Caco-2 (cell line): ENCODE measurements at regions of chr19 and their contacts with region 1.

Region 1: DNA sequence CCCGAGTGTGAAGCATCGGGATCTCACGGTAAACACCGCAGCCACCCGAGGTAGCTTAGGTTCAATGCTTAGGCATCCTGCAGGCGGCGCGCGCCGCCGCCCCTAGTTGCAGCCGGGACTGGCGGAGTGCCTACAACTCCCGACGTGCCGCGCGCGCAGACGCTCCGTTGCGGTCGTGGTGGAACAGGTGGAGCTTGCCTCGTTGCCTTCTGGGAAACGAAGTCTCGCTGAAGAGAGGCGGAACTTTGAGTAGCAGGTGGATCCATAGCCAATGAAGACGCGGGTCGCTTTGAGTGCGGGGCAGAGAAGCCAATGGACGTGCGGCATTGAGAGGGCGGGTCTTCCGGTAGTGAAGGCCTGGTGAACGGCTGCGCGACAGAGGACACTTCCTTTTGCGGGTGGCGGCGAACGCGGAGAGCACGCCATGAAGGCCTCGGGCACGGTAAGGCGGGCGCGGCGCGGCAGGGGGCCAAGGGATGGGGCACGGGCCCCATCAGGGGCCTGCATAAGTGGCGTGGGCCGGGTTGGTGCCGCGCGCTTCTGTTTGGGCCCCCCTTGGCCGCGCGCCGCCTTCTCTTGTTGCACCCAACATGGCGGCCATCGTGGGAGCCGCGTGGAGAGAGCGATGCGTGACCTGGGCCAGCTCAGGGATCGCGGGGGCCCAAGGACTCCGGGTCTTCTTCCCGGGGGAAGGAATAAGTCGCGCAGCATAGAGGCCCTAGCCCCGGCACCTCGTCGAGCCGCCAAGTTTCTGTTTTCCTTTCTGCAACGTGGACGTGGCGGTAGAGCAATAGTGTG is at the start of gene RPL18A:
- DNase-seq: peak; percentile 97 to 99
- H3K4me3 ChIP-seq: peak within 1 kb of the TSS; percentile 84
- H3K4me3 Mint-ChIP-seq: peak within 1 kb of the TSS; percentile 90
- H3K27ac Mint-ChIP-seq: peak within 1 kb of the TSS; percentile 98
- H3K4me1 ChIP-seq: peaks cover 9% of the 10 kb centered on the region
- H3K4me1 Mint-ChIP-seq: no peaks in the 10 kb centered on the region
- H3K27me3 ChIP-seq: no peaks in the 10 kb centered on the region
- H3K27me3 Mint-ChIP-seq: peaks cover 2% of the 10 kb centered on the region
- CTCF ChIP-seq: peak; percentile 60 to 89
- total RNA-seq, gene RPL18A: 1,599 and 1,686 TPM in 2 replicates

Region 2: GRCh38 chr19:17419621-17420466 is 439.9 kb before region 1 on chr19 and contains the start of gene MVB12A:
- CTCF ChIA-PET with region 1: no interaction called
- POLR2A ChIA-PET with region 1: interaction called, 12 read pairs
- intact Hi-C with region 1: no loop called
- DNase-seq: peak; percentile 95 to 97
- H3K4me3 ChIP-seq: peak within 1 kb of the TSS; percentile 85
- H3K4me3 Mint-ChIP-seq: peak within 1 kb of the TSS; percentile 85
- H3K27ac Mint-ChIP-seq: peak within 1 kb of the TSS; percentile 89
- H3K4me1 ChIP-seq: peaks cover 8% of the 10 kb centered on the region; the same call in 1 of the 2 replicates
- H3K4me1 Mint-ChIP-seq: peaks cover 11% of the 10 kb centered on the region
- H3K27me3 ChIP-seq: no peaks in the 10 kb centered on the region
- H3K27me3 Mint-ChIP-seq: no peaks in the 10 kb centered on the region
- CTCF ChIP-seq: no peak
- total RNA-seq, gene MVB12A: 36.7 and 37.6 TPM in 2 replicates

Region 3: DNA sequence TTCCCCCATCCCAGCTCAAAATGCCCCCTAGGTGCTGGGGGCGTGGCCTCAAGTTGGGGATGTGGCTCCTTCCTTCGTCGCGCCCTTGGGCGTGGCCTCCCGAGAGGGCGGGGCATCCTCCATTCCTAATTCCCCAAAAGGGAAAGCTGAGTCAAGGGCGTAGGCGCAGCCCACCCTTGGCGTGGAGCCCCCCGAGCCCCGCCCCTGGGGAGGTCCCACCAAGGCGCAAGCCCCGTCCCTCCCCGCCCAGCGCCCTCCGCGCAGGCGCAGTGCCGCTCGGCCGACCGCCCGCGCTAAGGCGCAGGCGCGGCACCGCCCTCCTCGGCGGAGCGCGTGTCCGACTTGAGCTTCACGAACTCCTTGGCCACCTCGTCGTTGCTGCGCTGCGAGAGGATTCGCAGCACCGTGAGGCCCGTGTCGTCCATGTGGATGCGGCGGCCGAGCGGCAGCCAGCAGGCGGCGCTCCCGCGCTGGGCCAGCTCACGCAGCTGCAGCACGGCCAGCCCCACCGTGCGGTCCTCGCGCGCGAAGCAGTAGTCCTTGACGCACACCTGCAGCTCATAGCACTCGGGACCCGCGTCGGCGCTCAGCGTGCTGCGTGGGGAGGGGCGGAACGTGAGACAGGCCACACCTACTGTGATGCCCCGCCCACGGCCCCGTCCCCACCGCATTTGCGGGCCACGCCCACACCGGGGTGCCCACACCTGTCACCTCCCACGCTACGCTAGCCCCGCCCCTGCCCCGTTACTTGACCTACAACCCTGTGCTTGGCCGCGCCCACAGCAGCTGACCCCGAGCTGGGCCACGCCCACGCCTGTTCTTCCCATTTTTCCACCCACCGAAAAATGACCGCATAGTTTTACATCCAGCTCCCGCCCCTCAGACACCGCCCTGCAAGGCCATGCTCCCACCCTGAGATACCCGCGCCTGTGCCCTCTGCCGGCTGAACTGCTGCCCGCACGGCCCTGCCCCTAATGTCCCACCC is 253.7 kb before region 1 on chr19:
- CTCF ChIA-PET with region 1: interaction called, 15 read pairs
- POLR2A ChIA-PET with region 1: interaction called, 6 read pairs
- intact Hi-C with region 1: no loop called
- DNase-seq: peak; percentile 95
- H3K4me3 ChIP-seq: peak overlapping the region; percentile 65
- H3K4me3 Mint-ChIP-seq: peak overlapping the region; percentile 73
- H3K27ac Mint-ChIP-seq: peak overlapping the region; percentile 81
- H3K4me1 ChIP-seq: no peaks in the 10 kb centered on the region
- H3K4me1 Mint-ChIP-seq: peaks cover 6% of the 10 kb centered on the region
- H3K27me3 ChIP-seq: no peaks in the 10 kb centered on the region
- H3K27me3 Mint-ChIP-seq: no peaks in the 10 kb centered on the region
- CTCF ChIP-seq: peak; percentile 52 to 66

Region 4: DNA sequence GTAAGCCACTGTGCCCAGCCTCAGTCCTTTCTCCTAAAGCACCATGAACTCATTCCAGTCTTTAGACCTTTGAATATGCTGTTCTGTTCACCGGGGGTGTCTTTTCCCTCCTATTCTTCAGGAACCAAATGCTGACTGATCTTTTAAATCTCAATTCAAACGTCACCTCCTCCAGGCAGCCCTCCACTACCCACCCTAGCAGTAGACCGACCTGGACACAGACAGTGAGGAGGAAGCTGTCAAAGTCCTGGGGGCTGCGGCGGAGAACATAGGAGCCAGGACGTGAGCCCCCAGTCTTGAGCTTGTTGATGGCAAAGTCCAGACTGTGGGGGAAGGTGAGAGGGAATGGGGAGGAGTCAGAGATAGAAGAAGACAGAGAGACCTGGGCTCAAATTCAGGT is 19.7 kb before region 1 on chr19:
- CTCF ChIA-PET with region 1: no interaction called
- POLR2A ChIA-PET with region 1: no interaction called
- intact Hi-C with region 1: no loop called
- DNase-seq: no peak
- H3K4me3 ChIP-seq: no peak overlapping the region
- H3K4me3 Mint-ChIP-seq: no peak overlapping the region
- H3K27ac Mint-ChIP-seq: no peak overlapping the region
- H3K4me1 ChIP-seq: no peaks in the 10 kb centered on the region
- H3K4me1 Mint-ChIP-seq: no peaks in the 10 kb centered on the region
- H3K27me3 ChIP-seq: no peaks in the 10 kb centered on the region
- H3K27me3 Mint-ChIP-seq: peaks cover 3% of the 10 kb centered on the region
- CTCF ChIP-seq: no peak

Region 5: DNA sequence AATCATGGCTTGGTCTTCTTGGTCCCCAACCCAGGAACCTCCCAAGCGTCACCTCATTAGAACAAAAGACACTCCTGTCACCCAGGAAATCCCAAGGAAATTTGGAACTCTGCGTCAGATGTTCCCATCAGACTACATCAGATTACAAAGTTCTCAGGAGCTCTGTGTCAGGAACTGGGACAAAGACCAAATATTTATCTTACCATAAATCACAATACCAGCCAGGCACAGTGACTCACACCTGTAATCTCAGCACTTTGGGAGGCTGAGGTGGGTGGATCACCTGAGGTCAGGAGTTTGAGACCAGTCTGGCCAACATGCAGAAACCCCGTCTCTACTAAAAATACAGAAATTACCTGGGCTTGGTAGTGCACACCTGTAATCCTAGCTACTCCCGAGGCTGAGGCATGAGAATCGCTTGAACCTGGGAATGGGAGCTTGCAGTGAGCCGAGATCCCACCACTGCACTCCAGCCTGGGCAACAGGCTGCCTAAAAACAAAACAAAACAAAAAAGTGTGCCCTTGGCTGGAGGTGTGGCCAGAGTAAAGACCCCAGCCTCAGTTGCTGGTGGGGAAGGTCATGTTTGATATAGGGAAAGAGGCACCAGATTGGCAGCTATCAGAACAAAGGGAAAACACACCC is 56.3 kb after region 1 on chr19:
- CTCF ChIA-PET with region 1: no interaction called
- POLR2A ChIA-PET with region 1: no interaction called
- intact Hi-C with region 1: no loop called
- DNase-seq: peak; percentile 16 to 58
- H3K4me3 ChIP-seq: no peak overlapping the region
- H3K4me3 Mint-ChIP-seq: no peak overlapping the region
- H3K27ac Mint-ChIP-seq: no peak overlapping the region
- H3K4me1 ChIP-seq: peaks cover 9% of the 10 kb centered on the region; the same call in 1 of the 2 replicates
- H3K4me1 Mint-ChIP-seq: no peaks in the 10 kb centered on the region
- H3K27me3 ChIP-seq: no peaks in the 10 kb centered on the region
- H3K27me3 Mint-ChIP-seq: no peaks in the 10 kb centered on the region
- CTCF ChIP-seq: no peak

Region 6: DNA sequence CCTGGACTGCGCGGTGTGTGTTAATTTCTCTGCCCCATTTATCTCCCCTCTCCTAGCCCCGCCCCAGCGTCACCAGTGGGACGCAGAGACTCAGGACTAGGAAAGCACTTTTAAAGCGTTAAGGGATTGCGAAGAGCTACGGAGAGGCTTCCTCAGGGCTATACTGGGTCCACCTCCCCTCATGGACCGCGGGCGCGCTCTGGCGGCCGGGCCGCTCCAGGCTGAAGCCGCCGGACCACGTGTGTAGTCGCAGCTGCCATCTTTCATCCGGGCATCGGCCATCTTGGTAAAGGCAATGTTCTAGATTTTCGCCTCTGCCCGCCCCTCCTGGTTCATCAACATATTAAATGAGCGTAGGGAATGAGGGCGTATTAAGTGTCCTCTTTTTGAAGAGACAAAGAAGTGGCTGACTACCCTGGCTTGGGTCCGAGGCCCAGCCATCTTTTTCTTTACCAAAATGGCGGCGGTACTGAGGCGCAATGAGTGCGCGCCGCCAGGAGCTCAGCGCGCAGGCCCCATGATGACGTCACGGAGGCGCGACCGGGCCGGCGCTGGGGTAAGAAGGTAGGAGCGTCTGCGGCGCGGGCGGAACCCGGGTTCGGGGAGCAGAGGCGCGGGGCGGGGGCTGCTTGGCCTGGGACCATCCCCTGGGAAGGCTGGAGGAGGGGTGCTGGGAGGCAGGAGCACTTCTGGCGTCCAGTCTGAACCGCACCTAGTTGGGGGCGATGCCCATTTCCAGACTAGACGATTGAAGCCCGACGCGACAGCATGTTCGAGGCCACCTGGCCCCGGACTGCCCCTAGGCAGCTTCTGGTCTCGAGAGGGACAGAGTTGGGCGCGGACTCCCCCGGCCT is 73.0 kb after region 1 on chr19 and contains the start of gene CCDC124:
- CTCF ChIA-PET with region 1: interaction called, 118 read pairs
- POLR2A ChIA-PET with region 1: interaction called, 77 read pairs
- intact Hi-C with region 1: loop called (anchors 1 kb)
- DNase-seq: peak; percentile 91 to 94
- H3K4me3 ChIP-seq: peak within 1 kb of the TSS; percentile 61
- H3K4me3 Mint-ChIP-seq: peak within 1 kb of the TSS; percentile 95
- H3K27ac Mint-ChIP-seq: peak within 1 kb of the TSS; percentile 98
- H3K4me1 ChIP-seq: 0 out of 2 replicates have a peak, but pooled peaks cover 8% of the 10 kb centered on the region
- H3K4me1 Mint-ChIP-seq: peaks cover 6% of the 10 kb centered on the region
- H3K27me3 ChIP-seq: no peaks in the 10 kb centered on the region
- H3K27me3 Mint-ChIP-seq: no peaks in the 10 kb centered on the region
- CTCF ChIP-seq: peak; percentile 85 to 96
- total RNA-seq, gene CCDC124: 73.3 TPM in 2 replicates

Region 7: GRCh38 chr19:17996826-17997316 is 137.1 kb after region 1 on chr19:
- CTCF ChIA-PET with region 1: interaction called, 6 read pairs
- POLR2A ChIA-PET with region 1: interaction called, 17 read pairs
- intact Hi-C with region 1: no loop called
- DNase-seq: peak; percentile 78 to 91
- H3K4me3 ChIP-seq: no peak overlapping the region
- H3K4me3 Mint-ChIP-seq: no peak overlapping the region
- H3K27ac Mint-ChIP-seq: no peak overlapping the region
- H3K4me1 ChIP-seq: peaks cover 1% of the 10 kb centered on the region; the same call in 1 of the 2 replicates
- H3K4me1 Mint-ChIP-seq: peaks cover 7% of the 10 kb centered on the region
- H3K27me3 ChIP-seq: no peaks in the 10 kb centered on the region
- H3K27me3 Mint-ChIP-seq: no peaks in the 10 kb centered on the region
- CTCF ChIP-seq: peak; percentile 92 to 95